BJ (cell line): ENCODE measurements at regions of chr4 and their contacts with region 1.

Region 1: GRCh38 chr4:15457406-15458201 is 12.1 kb upstream of the CC2D2A start:
- DNase-seq: no peak
- H3K4me3 ChIP-seq: no peak overlapping the region
- H3K27me3 ChIP-seq: peaks cover 7% of the 10 kb centered on the region; the same call in 1 of the 2 replicates
- CTCF ChIP-seq: peak; percentile 66

Region 2: GRCh38 chr4:15231265-15232091 is 226.1 kb before region 1 on chr4:
- CTCF ChIA-PET with region 1: interaction called, 59 read pairs
- POLR2A ChIA-PET with region 1: interaction called, 5 read pairs
- DNase-seq: no peak
- H3K4me3 ChIP-seq: no peak overlapping the region
- H3K27me3 ChIP-seq: 0 out of 2 replicates have a peak, but pooled peaks cover 2% of the 10 kb centered on the region
- CTCF ChIP-seq: peak; percentile 76

Region 3: GRCh38 chr4:15238720-15239119 is 218.9 kb before region 1 on chr4:
- CTCF ChIA-PET with region 1: interaction called, 59 read pairs
- POLR2A ChIA-PET with region 1: no interaction called
- DNase-seq: no peak
- H3K4me3 ChIP-seq: no peak overlapping the region
- H3K27me3 ChIP-seq: peaks cover 13% of the 10 kb centered on the region
- CTCF ChIP-seq: peak; percentile 66

Region 4: DNA sequence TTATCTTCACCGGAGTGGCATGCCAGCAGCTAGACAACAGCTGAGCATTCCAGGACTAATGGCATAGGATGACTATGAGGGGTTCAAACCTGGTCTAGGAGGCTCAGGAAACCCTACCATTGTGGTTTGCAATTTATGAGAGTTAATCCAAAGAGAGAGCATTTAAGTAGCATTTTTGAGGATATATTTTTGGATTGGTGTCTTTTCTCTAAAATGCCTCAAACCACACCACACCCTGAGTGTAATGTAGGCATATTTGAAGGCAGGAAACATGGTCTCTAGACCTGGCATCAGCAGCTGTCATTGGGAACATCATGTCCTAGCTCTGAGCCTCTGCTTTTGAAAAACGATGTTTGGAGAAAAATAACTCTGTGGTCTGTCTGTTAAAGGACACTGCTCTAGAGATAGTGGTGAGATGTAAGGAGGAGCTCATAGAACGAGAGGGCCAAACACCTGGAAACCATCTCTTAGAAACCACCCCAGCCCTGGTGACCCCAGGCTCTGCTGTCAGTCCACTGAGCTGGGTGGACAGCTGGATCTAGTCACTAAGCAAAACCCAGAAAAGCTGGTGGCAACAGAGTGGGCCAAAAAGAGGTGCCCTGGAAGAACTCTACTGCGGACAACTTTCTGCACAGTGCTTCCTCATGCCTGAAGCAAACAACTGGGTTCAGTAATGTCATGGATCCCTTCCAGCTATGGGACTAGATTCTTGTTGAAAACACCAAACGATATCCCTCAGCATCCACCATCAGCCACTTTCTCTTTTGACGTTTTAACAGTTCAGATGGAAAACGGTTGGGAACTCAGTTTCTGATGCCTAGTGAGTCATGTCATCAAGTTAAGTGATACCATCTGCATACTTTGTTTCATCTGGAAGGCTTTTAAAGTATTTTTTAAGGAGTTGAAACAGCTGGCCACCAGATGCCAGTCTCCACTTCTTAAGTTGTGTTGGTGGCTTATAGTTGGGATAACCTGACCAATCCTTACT is 130.0 kb before region 1 on chr4:
- CTCF ChIA-PET with region 1: interaction called, 15 read pairs
- POLR2A ChIA-PET with region 1: no interaction called
- DNase-seq: peak; percentile 95
- H3K4me3 ChIP-seq: no peak overlapping the region
- H3K27me3 ChIP-seq: no peaks in the 10 kb centered on the region
- CTCF ChIP-seq: no peak

Region 5: DNA sequence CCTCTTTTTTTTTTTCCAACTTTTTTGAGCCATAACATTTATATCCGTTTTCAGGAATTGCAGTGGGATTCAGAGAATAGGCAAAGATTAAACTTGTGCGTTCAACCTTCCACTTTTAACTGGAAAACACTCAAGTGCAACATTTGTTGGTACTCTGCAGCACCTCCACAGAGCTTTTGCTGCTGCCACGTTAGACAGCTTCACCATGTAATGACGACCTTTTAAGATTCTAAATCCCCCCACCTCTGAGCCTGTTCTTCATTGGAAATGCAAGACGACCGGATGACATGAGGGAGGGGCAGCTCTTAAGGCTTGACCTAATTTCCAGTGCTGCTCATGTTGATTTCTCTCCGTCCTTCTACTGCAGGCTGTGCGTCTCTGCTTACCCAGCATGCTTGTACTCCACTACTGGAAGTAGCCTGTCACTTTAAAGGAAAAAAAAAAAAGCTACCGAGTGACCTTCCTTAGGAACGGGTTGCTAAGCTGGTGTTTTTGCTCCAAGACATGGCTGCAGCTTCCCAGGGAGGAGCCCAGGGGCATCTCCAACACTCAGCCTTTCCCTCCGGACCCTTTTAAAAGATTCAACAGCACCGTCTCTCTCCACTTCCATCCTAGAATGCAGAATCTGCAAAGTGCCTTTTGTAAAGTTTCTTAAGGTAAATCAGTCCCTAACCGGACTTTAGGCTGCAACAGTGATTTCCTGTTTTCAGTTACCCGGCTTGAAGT is 12.0 kb after region 1 on chr4 and contains the start of gene CC2D2A:
- CTCF ChIA-PET with region 1: interaction called, 30 read pairs
- POLR2A ChIA-PET with region 1: no interaction called
- DNase-seq: no peak
- H3K4me3 ChIP-seq: peak within 1 kb of the TSS; percentile 39
- H3K27me3 ChIP-seq: no peaks in the 10 kb centered on the region
- CTCF ChIP-seq: no peak
- polyA plus RNA-seq, gene CC2D2A: 10.0 and 14.4 TPM in 2 replicates